ENCODE measurements at regions of chr2 and their contacts with region 1.

Region 1: GRCh38 chr2:198127627-198128026 is 323.2 kb downstream of the PLCL1 start:
- DNase-seq: no peak
- H3K4me3 ChIP-seq: no peak overlapping the region
- H3K27ac ChIP-seq: no peak overlapping the region
- H3K4me1 ChIP-seq: no peaks in the 10 kb centered on the region
- H3K27me3 ChIP-seq: no peaks in the 10 kb centered on the region
- CTCF ChIP-seq: peak; percentile 10 to 66 (median 46)
- POLR2A ChIP-seq: no peak

Region 2: GRCh38 chr2:198296665-198297308 is 169.2 kb after region 1 on chr2:
- intact Hi-C with region 1: loop called (anchors 10 kb)
- DNase-seq: peak; percentile 55
- H3K4me3 ChIP-seq: no peak overlapping the region
- H3K27ac ChIP-seq: no peak overlapping the region
- H3K4me1 ChIP-seq: no peaks in the 10 kb centered on the region
- H3K27me3 ChIP-seq: no peaks in the 10 kb centered on the region
- CTCF ChIP-seq: peak; percentile 50 to 81 (median 62)
- POLR2A ChIP-seq: no peak